Kidney (tissue), 22 donors: ENCODE measurements at regions of chr19 and their contacts with region 1.

Region 1: GRCh38 chr19:35013031-35013819 is 13.1 kb downstream of the GRAMD1A start:
- DNase-seq: peak; percentile 64 to 91 (median 81)
- H3K4me3 ChIP-seq: no peak overlapping the region
- H3K27ac ChIP-seq: no peak overlapping the region
- H3K4me1 ChIP-seq: peaks cover 0 to 9% (median 0%) of the 10 kb centered on the region in 3 donors
- H3K27me3 ChIP-seq: no peaks in the 10 kb centered on the region
- CTCF ChIP-seq: peak; percentile 92

Region 2: DNA sequence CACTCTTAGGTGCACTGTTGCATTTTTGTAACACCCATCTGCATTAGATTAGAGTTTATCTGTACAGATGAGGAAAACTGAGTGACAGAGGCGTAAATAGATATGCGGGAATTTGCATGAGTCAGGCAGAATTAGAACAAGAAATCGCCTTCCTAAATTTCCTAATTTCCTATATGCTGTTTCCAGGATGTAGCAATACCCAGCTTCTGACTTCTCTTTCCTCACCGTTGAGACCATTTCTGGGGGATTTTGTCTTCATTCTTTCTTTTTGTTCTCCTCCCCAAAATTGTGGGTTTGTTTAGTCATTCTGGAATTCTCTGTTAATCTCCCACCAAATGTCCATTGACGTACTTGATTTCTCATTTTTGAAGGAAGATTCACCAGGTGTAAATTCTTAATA is 38.6 kb before region 1 on chr19:
- intact Hi-C with region 1: loop called (anchors 5 kb)
- DNase-seq: no peak
- H3K4me3 ChIP-seq: no peak overlapping the region
- H3K27ac ChIP-seq: no peak overlapping the region
- H3K4me1 ChIP-seq: peaks cover 0 to 2% (median 0%) of the 10 kb centered on the region in 3 donors
- H3K27me3 ChIP-seq: no peaks in the 10 kb centered on the region
- CTCF ChIP-seq: no peak

Region 3: DNA sequence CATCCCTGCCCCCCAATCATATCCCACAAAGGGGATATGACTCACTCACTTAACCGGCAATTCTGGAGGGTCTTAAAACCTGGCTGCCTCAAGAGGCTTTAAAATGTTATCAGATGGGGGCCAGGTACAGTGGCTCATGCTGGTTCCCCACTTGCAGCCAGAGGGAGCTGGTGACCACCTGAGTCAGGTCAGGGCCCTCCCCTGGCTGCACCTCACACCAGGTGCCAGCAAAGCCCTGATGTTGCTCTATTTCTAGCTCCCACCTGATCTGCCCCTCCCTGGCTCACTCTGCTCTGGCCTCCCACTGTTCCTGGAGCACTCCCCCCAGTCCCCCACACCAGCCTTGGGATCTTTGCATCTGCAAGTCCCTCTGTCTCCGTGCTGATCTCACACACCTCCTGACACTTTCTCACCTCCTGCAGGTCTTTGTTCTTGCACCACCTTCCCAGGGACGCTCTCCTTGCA is 42.5 kb after region 1 on chr19:
- intact Hi-C with region 1: no loop called
- DNase-seq: peak in 2 of 5 donors; percentile 26 to 58
- H3K4me3 ChIP-seq: no peak overlapping the region
- H3K27ac ChIP-seq: no peak overlapping the region
- H3K4me1 ChIP-seq: no peaks in the 10 kb centered on the region
- H3K27me3 ChIP-seq: no peaks in the 10 kb centered on the region
- CTCF ChIP-seq: peak; percentile 25

Region 4: DNA sequence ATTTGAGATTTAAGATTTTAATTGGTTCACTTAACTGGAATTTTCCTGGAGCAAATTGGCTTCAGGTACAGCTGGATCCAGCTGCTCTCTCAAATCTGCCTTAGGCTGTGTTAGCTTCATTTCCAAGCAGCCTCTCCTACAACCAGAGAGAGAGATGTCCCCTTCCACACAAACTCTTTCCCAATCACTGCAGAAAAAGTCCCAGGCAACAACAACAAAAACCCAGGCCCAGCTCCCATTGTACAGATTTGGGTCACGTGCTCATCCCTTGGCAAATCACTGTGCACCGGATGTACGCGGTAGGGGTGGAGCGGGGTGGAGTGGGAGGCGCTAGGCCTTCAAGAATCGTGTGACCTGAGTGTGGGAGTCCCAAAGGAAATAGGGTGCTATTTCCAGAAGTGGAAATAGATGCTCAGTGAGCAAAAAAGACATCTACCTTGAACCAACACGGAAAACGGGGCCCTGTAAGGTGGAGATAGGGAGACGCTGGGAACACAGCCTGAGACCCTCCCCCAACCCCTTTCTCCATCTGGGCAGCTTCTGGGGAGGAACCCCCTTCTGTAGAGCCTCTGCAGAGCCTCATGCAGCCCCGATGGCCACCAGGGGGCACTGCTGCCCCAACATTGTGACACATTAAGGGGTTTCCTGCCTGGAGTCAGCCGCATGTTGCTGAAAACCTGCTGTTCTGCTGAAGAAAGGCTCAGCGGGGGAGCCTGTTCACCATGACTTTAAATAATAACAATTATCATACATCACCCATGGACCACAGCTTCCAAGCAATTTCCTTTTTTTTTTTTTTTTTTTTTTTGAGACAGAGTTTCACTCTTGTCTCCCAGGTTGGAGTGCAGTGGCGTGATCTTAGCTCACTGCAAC is 53.7 kb after region 1 on chr19:
- intact Hi-C with region 1: no loop called
- DNase-seq: peak; percentile 90 to 94 (median 92)
- H3K4me3 ChIP-seq: no peak overlapping the region
- H3K27ac ChIP-seq: no peak overlapping the region
- H3K4me1 ChIP-seq: peaks cover 0 to 3% (median 0%) of the 10 kb centered on the region in 3 donors
- H3K27me3 ChIP-seq: no peaks in the 10 kb centered on the region
- CTCF ChIP-seq: peak; percentile 83

Region 5: GRCh38 chr19:35098413-35099049 is 85.3 kb after region 1 on chr19:
- intact Hi-C with region 1: no loop called
- DNase-seq: no peak
- H3K4me3 ChIP-seq: no peak overlapping the region
- H3K27ac ChIP-seq: no peak overlapping the region
- H3K4me1 ChIP-seq: no peaks in the 10 kb centered on the region
- H3K27me3 ChIP-seq: no peaks in the 10 kb centered on the region
- CTCF ChIP-seq: no peak

Region 6: GRCh38 chr19:35375505-35376307 is 362.5 kb after region 1 on chr19:
- intact Hi-C with region 1: no loop called
- DNase-seq: no peak
- H3K4me3 ChIP-seq: no peak overlapping the region
- H3K27ac ChIP-seq: no peak overlapping the region
- H3K4me1 ChIP-seq: no peaks in the 10 kb centered on the region
- H3K27me3 ChIP-seq: no peaks in the 10 kb centered on the region
- CTCF ChIP-seq: no peak